HepG2 (cell line): ENCODE measurements at regions of chr17 and their contacts with region 1.

Region 1: DNA sequence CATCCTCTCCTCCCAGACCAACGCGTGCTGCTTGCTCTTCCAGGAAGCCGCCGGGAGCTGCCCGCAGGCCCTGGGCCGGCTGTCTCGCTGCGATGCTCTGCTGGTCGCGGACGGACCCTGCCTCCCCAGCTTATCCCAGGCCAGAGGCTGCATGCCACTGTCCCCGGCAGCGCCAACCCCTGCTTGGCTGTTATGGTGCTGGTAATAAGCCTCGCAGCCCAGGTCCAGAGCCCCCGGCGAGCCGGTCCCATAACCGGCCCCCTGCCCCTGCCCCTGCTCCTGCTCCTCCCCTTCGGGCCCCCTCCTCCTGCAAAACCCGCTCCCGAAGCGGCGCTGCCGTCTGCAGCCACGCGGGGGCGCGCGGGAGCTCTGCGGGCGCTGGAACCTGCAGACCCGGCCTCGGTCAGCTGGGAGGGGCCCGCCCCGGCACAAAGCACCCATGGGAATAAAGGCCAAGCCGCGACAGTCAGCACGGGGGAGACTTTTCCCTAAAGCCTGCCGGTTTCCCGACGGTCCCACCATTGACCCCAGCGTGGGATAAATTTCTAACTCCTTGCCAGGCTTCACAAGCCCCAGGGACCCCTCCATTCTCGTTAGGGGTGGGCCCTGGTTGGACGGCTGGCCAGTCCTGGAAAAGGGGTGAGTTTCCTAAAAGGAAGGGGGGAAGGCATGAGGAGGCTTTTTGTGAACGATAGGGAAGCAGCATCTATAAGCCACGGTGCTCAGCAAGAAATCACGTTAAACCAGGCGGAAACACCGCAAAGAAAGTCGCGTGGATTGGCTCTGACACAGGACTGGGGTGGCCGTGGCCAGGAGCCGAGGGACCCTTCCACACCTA is 11.2 kb downstream of the ENPP7 start:
- DNase-seq: peak; percentile 67
- ATAC-seq: peak; percentile 53
- H3K4me3 ChIP-seq: peak overlapping the region; percentile 53 to 75 (median 56)
- H3K27ac ChIP-seq: peak overlapping the region; percentile 38
- H3K4me1 ChIP-seq: peaks cover 93% of the 10 kb centered on the region
- H3K27me3 ChIP-seq: peaks cover 7 to 11% of the 10 kb centered on the region in 2 experiments; a peak in 4 of 5 replicates
- CTCF ChIP-seq: peak; percentile 98
- EP300 ChIP-seq: peak in 1 of 2 experiments; percentile 30; a peak in 1 of 4 replicates
- POLR2A ChIP-seq: no peak
- RAD21 ChIP-seq: peak; percentile 86

Region 2: GRCh38 chr17:79695797-79696609 is 46.0 kb before region 1 on chr17:
- CTCF ChIA-PET with region 1: no interaction called
- POLR2A ChIA-PET with region 1: no interaction called
- in situ Hi-C with region 1: no loop called
- intact Hi-C with region 1: no loop called
- DNase-seq: no peak
- ATAC-seq: peak; percentile 19; the same call in 2 of the 3 replicates
- H3K4me3 ChIP-seq: no peak overlapping the region
- H3K27ac ChIP-seq: no peak overlapping the region
- H3K4me1 ChIP-seq: no peaks in the 10 kb centered on the region
- H3K27me3 ChIP-seq: peaks cover 36 to 81% of the 10 kb centered on the region in 2 experiments; a peak in 4 of 5 replicates
- CTCF ChIP-seq: no peak
- EP300 ChIP-seq: no peak
- POLR2A ChIP-seq: no peak
- RAD21 ChIP-seq: no peak

Region 3: GRCh38 chr17:79760197-79760906 is 18.4 kb after region 1 on chr17:
- CTCF ChIA-PET with region 1: no interaction called
- POLR2A ChIA-PET with region 1: interaction called, 20 read pairs
- in situ Hi-C with region 1: no loop called
- intact Hi-C with region 1: no loop called
- DNase-seq: peak; percentile 86
- ATAC-seq: peak; percentile 90
- H3K4me3 ChIP-seq: peak overlapping the region in 2 of 3 experiments; percentile 4 to 61; a peak in 4 of 6 replicates
- H3K27ac ChIP-seq: peak overlapping the region; percentile 81
- H3K4me1 ChIP-seq: peaks cover 56% of the 10 kb centered on the region
- H3K27me3 ChIP-seq: peaks cover 0 to 3% of the 10 kb centered on the region in 2 experiments; a peak in 2 of 5 replicates
- CTCF ChIP-seq: peak; percentile 24; the same call in 1 of the 2 replicates
- EP300 ChIP-seq: peak in 1 of 2 experiments; percentile 82; a peak in 3 of 4 replicates
- POLR2A ChIP-seq: peak; percentile 52 to 88; a peak in 3 of 4 replicates
- RAD21 ChIP-seq: no peak

Region 4: DNA sequence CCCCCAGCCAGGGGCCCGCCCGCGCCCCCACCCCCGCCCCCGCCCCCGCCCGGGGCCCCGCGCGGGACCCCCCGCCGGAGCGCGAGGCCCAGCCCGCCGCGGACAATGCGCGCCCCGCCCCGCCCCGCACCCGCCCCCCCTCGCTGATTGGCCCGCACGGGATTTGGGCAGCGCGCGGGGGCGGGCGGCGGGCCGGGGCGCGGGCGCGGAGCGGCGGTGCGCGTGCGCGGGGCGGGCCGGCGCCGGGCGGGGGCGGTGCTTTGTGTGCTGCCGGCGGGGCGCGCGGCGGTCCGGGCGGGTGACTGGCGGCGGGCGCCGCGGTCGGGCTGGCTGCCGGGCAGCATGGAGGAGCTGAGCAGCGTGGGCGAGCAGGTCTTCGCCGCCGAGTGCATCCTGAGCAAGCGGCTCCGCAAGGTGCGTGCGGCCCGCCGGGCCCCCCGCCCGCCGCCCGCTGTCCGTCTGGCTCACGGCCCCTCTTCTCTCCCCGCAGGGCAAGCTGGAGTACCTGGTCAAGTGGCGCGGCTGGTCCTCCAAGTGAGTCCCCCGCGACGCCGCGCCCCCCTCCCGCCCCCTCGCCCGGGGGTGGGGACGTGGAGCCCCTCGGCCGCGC is 36.0 kb after region 1 on chr17 and contains the start of gene CBX2:
- CTCF ChIA-PET with region 1: interaction called, 3 read pairs
- POLR2A ChIA-PET with region 1: interaction called, 12 read pairs
- in situ Hi-C with region 1: no loop called
- intact Hi-C with region 1: loop called (anchors 5 kb)
- DNase-seq: peak; percentile 43
- ATAC-seq: peak; percentile 60
- H3K4me3 ChIP-seq: peak within 1 kb of the TSS; percentile 76 to 86 (median 84)
- H3K27ac ChIP-seq: peak within 1 kb of the TSS; percentile 69
- H3K4me1 ChIP-seq: peaks cover 78% of the 10 kb centered on the region
- H3K27me3 ChIP-seq: peaks cover 0 to 7% of the 10 kb centered on the region in 2 experiments; a peak in 2 of 5 replicates
- CTCF ChIP-seq: no peak; the same call in 1 of the 2 replicates
- EP300 ChIP-seq: no peak
- POLR2A ChIP-seq: peak; percentile 53 to 84
- RAD21 ChIP-seq: 0 out of 2 replicates have a peak, but pooled peaks have one; percentile 35
- total RNA-seq, gene CBX2: 13.0 and 14.5 TPM in 2 replicates

Region 5: DNA sequence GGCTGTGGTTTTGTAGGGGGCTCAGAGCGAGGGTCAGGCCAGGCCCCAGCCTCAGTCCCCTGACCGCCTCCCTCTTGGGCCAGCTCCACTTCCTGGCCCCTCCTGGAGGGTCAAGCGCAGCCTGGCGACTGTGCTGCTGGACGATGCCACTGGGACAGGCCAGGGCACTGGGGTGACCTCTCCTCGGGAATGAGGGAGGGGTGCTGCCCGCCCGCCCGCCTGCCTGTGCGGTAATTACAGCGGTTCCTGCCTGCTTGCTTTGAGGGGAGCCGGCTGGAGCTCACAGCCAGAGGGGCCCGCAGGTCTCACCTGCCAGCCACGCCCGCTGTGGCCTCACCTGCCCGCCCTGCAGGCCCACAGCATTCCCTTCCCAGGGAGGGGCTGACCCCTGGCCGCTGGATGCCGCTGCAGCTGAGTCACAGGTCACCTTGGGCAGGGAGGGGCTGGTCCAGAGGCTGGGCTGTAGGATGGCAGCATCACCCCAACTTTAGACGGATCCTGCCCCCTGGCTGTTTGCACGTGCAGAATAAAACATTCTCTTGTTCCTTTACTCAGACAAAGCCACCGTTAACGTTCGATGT is 174.0 kb after region 1 on chr17:
- CTCF ChIA-PET with region 1: no interaction called
- POLR2A ChIA-PET with region 1: interaction called, 4 read pairs
- in situ Hi-C with region 1: no loop called
- intact Hi-C with region 1: loop called (anchors 5 kb)
- DNase-seq: peak; percentile 75
- ATAC-seq: peak; percentile 31
- H3K4me3 ChIP-seq: peak overlapping the region in 1 of 3 experiments; percentile 9; a peak in 1 of 6 replicates
- H3K27ac ChIP-seq: no peak overlapping the region
- H3K4me1 ChIP-seq: peaks cover 82% of the 10 kb centered on the region
- H3K27me3 ChIP-seq: peaks cover 3 to 85% of the 10 kb centered on the region in 2 experiments; a peak in 4 of 5 replicates
- CTCF ChIP-seq: peak; percentile 77
- EP300 ChIP-seq: no peak
- POLR2A ChIP-seq: no peak
- RAD21 ChIP-seq: peak; percentile 74